Posterior cingulate gyrus (tissue), 11 donors: ENCODE measurements at regions of chr1 and their contacts with region 1.

Region 1: GRCh38 chr1:116168277-116169097 is 57.3 kb downstream of the MAB21L3 start:
- DNase-seq: peak; percentile 40 to 96 (median 79)

Region 2: DNA sequence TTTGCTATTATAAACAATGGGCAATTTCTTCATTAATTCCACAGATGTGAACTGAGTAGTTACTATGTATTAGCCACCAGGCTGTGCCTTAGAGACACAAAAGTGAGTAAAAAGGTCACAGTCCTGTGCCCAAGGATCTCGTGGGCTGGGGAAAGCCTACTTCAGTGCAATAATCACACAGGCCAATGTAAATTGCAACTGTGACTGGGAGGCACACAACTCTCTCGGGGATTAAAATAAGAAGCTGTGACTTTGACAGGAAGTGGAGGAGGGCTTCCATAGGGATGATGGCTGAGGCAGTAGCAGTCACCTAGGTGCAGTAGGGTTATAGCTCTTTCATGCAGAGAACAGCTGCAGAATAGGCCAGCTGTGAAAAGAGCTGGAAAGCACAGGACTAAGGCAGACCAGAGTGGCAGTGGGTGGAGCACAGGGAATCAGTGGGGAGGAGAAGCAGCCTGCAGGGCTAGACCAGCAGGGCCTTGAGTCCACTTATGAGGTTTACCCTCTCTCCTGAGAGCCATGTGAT is 64.6 kb after region 1 on chr1:
- intact Hi-C with region 1: no loop called
- DNase-seq: no peak

Region 3: GRCh38 chr1:116372587-116373444 is 204.3 kb after region 1 on chr1 and contains the start of gene ATP1A1:
- intact Hi-C with region 1: loop called (anchors 1 kb)
- DNase-seq: peak; percentile 94 to 100 (median 98)